RWPE1 (cell line): ENCODE measurements at regions of chr17 and their contacts with region 1.

Region 1: GRCh38 chr17:49496183-49496866 is 1.2 kb downstream of the NGFR start:
- DNase-seq: peak; percentile 56
- H3K27ac ChIP-seq: no peak overlapping the region
- CTCF ChIP-seq: peak; percentile 96

Region 2: GRCh38 chr17:49076573-49077384 is 419.5 kb before region 1 on chr17:
- CTCF ChIA-PET with region 1: no interaction called
- POLR2A ChIA-PET with region 1: no interaction called
- DNase-seq: no peak
- H3K27ac ChIP-seq: no peak overlapping the region
- CTCF ChIP-seq: no peak

Region 3: GRCh38 chr17:49486012-49486641 is 10.2 kb before region 1 on chr17:
- CTCF ChIA-PET with region 1: interaction called, 12 read pairs
- POLR2A ChIA-PET with region 1: no interaction called
- DNase-seq: no peak
- H3K27ac ChIP-seq: no peak overlapping the region
- CTCF ChIP-seq: no peak

Region 4: GRCh38 chr17:49585422-49586027 is 89.2 kb after region 1 on chr17:
- CTCF ChIA-PET with region 1: no interaction called
- POLR2A ChIA-PET with region 1: no interaction called
- DNase-seq: no peak
- H3K27ac ChIP-seq: no peak overlapping the region
- CTCF ChIP-seq: no peak